Activated T-helper 1 cell treated with anti-CD3 and anti-CD28 coated beads, Interleukin-12 subunit alpha, Interleukin-12 subunit beta, Interleukin-2, Interleukin-4 antibody, amounts not matched to agents 30 ng/mL and 10 ng/mL and 1 ng/mL, durations not matched to agents 14 hours and 24 hours and 36 hours (primary cell): ENCODE measurements at regions of chr7 and their contacts with region 1.

Region 1: GRCh38 chr7:83629117-83629880 is 19.6 kb downstream of the SEMA3E start:
- DNase-seq: no peak
- H3K4me3 Mint-ChIP-seq: no peak overlapping the region
- H3K27ac Mint-ChIP-seq: no peak overlapping the region
- H3K4me1 Mint-ChIP-seq: no peaks in the 10 kb centered on the region
- H3K27me3 Mint-ChIP-seq: no peaks in the 10 kb centered on the region

Region 2: GRCh38 chr7:82722946-82723345 is 906.4 kb before region 1 on chr7:
- intact Hi-C with region 1: loop called (anchors 5 kb)
- DNase-seq: no peak
- H3K4me3 Mint-ChIP-seq: no peak overlapping the region
- H3K27ac Mint-ChIP-seq: no peak overlapping the region
- H3K4me1 Mint-ChIP-seq: no peaks in the 10 kb centered on the region
- H3K27me3 Mint-ChIP-seq: no peaks in the 10 kb centered on the region

Region 3: DNA sequence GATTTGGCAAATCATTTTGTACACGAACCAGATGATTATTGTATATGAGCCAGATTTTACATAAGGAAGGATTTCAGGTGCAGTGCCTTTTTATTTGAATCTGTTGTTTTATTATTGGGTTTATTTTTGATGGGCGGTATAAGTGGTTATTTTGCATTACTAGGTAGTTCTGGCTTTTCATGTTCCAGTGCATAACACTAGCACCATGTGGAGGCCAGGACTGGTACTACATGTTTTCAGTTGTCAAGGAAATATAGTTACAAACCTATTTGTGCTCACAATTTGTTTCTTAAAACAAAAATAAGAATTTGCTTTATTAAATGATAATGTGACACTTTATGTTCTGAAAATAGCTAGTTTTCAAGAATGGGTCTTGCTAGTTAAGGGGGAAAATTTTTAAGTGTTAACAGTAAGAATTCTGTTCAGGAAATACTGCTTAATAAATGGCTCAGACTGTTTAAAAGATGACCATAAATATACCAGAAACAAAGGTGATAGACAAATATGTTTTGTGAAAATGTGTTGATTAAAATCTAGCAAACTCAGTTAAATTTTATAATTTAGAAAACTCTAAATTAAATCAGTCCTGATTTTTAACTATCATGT is 26.8 kb after region 1 on chr7:
- intact Hi-C with region 1: no loop called
- DNase-seq: no peak
- H3K4me3 Mint-ChIP-seq: no peak overlapping the region
- H3K27ac Mint-ChIP-seq: no peak overlapping the region
- H3K4me1 Mint-ChIP-seq: no peaks in the 10 kb centered on the region
- H3K27me3 Mint-ChIP-seq: peaks cover 2% of the 10 kb centered on the region

Region 4: GRCh38 chr7:83701736-83702135 is 72.4 kb after region 1 on chr7:
- intact Hi-C with region 1: no loop called
- DNase-seq: no peak
- H3K4me3 Mint-ChIP-seq: no peak overlapping the region
- H3K27ac Mint-ChIP-seq: no peak overlapping the region
- H3K4me1 Mint-ChIP-seq: no peaks in the 10 kb centered on the region
- H3K27me3 Mint-ChIP-seq: no peaks in the 10 kb centered on the region